CD4-positive, alpha-beta T cell (primary cell): ENCODE measurements at regions of chr12 and their contacts with region 1.

Region 1: DNA sequence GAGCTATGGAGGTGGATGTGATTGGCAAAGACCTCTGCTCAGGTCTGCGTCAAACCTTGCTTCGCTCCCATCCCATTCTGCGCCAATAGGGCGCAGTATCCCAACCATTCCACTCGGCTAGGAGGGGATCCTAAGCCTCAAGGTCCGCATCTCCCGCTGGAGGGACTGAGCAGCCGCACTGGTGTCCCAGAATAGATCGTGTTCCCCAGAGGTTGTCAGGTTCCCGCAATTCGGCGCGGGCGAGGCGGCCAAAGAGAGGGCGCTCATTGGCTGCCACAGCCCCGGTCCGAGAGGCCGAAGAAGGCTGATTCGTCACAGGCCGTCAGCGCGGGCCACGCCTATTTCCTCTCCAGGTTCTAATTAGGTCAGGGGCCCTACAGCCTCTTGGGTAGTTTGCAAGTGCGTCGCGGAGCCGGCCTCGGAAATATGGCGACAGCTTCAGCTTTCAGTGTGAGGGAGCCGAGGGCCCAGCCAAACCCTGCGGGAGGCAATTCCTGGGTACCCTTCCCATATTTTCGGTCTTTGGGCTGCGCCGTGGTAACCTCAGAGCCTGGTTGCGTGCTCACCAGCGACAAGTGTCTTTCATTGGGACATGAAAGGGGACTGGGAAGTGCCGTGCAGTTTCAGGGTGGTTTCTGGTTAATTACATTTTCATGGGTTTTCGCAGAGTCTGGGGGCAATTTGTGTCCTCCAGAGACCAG is 5.0 kb downstream of the OR10AD1 start:
- DNase-seq: peak; percentile 80 to 97 (median 86)
- ATAC-seq: peak; percentile 84
- H3K4me3 ChIP-seq: peak overlapping the region; percentile 97
- H3K4me3 Mint-ChIP-seq: peak overlapping the region; percentile 86
- H3K27ac ChIP-seq: peak overlapping the region; percentile 96 to 99
- H3K27ac Mint-ChIP-seq: peak overlapping the region; percentile 87
- H3K4me1 ChIP-seq: peaks cover 39% of the 10 kb centered on the region
- H3K4me1 Mint-ChIP-seq: peaks cover 48% of the 10 kb centered on the region
- H3K27me3 ChIP-seq: no peaks in the 10 kb centered on the region
- H3K27me3 Mint-ChIP-seq: peaks cover 5% of the 10 kb centered on the region
- CTCF ChIP-seq: no peak

Region 2: DNA sequence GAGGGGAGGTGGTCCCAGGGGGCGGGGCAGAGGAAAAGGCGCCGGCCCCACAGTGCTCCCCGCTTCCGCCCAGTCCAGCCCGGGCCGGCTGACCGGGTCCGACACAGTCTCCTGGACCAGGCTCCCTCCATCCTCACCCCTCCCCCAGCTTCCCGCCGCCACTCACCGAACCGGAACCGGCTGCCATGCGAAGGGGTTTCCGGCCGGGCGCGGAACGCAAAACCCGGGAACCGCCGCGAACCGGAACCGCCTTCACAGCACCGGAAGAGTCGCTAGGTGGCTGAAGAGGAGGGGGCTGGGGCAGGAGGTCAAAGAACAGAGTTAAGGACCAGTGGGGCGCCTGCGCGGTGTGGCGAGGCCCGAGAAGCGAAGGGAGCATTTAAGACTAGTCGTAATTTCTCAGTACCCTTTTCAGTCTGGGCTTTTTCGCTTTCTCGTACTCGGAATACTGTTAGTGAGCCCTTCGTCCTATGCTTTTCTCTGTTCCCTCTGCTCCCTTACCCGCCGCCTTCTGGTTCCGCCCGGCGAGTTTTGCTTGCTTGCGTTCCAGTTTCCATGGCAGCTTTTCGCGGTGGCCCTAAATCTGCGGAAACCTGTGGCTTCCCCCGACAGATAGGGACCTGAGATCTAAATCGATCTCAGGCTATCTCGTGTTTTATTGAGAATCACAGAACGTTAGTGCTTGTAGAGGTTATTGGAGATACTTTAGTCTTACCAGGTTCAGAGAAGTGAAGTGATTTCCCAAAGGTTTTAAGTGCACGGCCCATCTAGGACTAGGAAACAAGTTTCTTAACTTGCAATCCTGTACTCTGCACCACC is 92.0 kb before region 1 on chr12 and contains the start of gene SENP1:
- CTCF ChIA-PET with region 1: no interaction called
- POLR2A ChIA-PET with region 1: interaction called, 26 read pairs
- intact Hi-C with region 1: loop called in 1 of 2 experiments (anchors 5 kb)
- DNase-seq: peak; percentile 84 to 95 (median 88)
- ATAC-seq: peak; percentile 80
- H3K4me3 ChIP-seq: peak within 1 kb of the TSS; percentile 89
- H3K4me3 Mint-ChIP-seq: peak within 1 kb of the TSS; percentile 94
- H3K27ac ChIP-seq: peak within 1 kb of the TSS; percentile 94 to 96
- H3K27ac Mint-ChIP-seq: peak within 1 kb of the TSS; percentile 89
- H3K4me1 ChIP-seq: peaks cover 33% of the 10 kb centered on the region
- H3K4me1 Mint-ChIP-seq: peaks cover 54% of the 10 kb centered on the region
- H3K27me3 ChIP-seq: no peaks in the 10 kb centered on the region
- H3K27me3 Mint-ChIP-seq: no peaks in the 10 kb centered on the region
- CTCF ChIP-seq: peak; percentile 44
- total RNA-seq, gene SENP1: 20.3 to 25.7 TPM

Region 3: GRCh38 chr12:48142818-48143674 is 55.1 kb before region 1 on chr12:
- CTCF ChIA-PET with region 1: no interaction called
- POLR2A ChIA-PET with region 1: no interaction called
- intact Hi-C with region 1: no loop called
- DNase-seq: no peak
- ATAC-seq: no peak
- H3K4me3 ChIP-seq: no peak overlapping the region
- H3K4me3 Mint-ChIP-seq: no peak overlapping the region
- H3K27ac ChIP-seq: no peak overlapping the region
- H3K27ac Mint-ChIP-seq: peak overlapping the region; percentile 31
- H3K4me1 ChIP-seq: no peaks in the 10 kb centered on the region
- H3K4me1 Mint-ChIP-seq: no peaks in the 10 kb centered on the region
- H3K27me3 ChIP-seq: no peaks in the 10 kb centered on the region
- H3K27me3 Mint-ChIP-seq: no peaks in the 10 kb centered on the region
- CTCF ChIP-seq: no peak

Region 4: DNA sequence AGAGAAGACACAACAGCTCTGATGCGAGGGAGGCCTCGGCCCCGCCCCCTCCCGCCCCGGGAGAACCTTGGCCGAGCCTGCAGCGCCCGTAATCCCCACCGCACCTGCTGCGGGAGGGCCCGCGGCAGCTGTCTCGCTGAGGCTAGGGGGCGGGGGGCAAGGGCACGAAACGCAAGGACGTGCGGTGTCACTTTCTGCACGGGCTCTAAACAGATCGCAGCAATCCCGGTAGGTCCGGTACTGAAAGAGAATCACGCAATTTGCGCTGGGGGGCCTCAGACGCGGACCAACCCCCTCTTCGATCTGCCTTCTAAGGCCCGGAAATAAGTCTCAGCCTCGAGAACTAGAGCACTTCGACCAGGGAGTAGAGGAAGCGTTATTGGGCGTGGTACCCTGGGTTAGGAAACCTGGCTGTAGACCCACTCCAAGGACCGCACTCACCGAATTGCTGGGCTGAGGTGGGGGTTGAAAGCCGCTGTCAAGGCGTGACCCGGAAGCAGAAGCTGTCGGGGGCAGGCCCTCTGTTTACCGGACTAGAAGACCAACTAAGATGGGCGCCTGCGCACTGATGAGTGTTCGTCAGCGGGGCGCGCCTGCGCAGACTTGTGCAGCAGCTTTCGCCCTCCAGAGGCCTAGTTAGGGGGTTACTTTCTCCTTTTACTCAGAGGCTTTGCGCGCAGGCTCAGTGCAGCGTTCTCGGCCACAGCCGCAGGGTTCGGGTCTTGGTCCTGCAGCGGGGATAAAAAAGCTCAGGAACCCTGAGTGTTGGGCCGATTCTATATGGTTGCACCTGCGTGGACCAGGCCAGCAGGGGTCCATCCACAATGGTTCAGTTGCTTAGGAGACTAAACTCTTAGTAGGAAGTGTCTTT is 40.9 kb before region 1 on chr12 and contains the start of gene ASB8:
- CTCF ChIA-PET with region 1: interaction called, 10 read pairs
- POLR2A ChIA-PET with region 1: interaction called, 67 read pairs
- intact Hi-C with region 1: loop called (anchors 1 to 5 kb)
- DNase-seq: peak; percentile 98 to 100 (median 99)
- ATAC-seq: peak; percentile 87
- H3K4me3 ChIP-seq: peak within 1 kb of the TSS; percentile 97
- H3K4me3 Mint-ChIP-seq: peak within 1 kb of the TSS; percentile 97
- H3K27ac ChIP-seq: peak within 1 kb of the TSS; percentile 78 to 89
- H3K27ac Mint-ChIP-seq: peak within 1 kb of the TSS; percentile 99
- H3K4me1 ChIP-seq: peaks cover 25% of the 10 kb centered on the region
- H3K4me1 Mint-ChIP-seq: peaks cover 63% of the 10 kb centered on the region
- H3K27me3 ChIP-seq: no peaks in the 10 kb centered on the region
- H3K27me3 Mint-ChIP-seq: no peaks in the 10 kb centered on the region
- CTCF ChIP-seq: peak; percentile 48
- total RNA-seq, gene ASB8: 50.9 TPM

Region 5: GRCh38 chr12:48183091-48183875 is 14.8 kb before region 1 on chr12 and contains the start of gene CCDC184:
- CTCF ChIA-PET with region 1: interaction called, 23 read pairs
- POLR2A ChIA-PET with region 1: interaction called, 73 read pairs
- intact Hi-C with region 1: no loop called
- DNase-seq: peak; percentile 51 to 93 (median 68)
- ATAC-seq: peak; percentile 76
- H3K4me3 ChIP-seq: peak within 1 kb of the TSS; percentile 76
- H3K4me3 Mint-ChIP-seq: peak within 1 kb of the TSS; percentile 93
- H3K27ac ChIP-seq: no peak within 1 kb of the TSS
- H3K27ac Mint-ChIP-seq: peak within 1 kb of the TSS; percentile 50
- H3K4me1 ChIP-seq: peaks cover 25% of the 10 kb centered on the region
- H3K4me1 Mint-ChIP-seq: no peaks in the 10 kb centered on the region
- H3K27me3 ChIP-seq: peaks cover 14 to 15% of the 10 kb centered on the region in 2 experiments
- H3K27me3 Mint-ChIP-seq: peaks cover 47% of the 10 kb centered on the region
- CTCF ChIP-seq: peak; percentile 51
- total RNA-seq, gene CCDC184: 0.92 to 1.0 TPM

Region 6: DNA sequence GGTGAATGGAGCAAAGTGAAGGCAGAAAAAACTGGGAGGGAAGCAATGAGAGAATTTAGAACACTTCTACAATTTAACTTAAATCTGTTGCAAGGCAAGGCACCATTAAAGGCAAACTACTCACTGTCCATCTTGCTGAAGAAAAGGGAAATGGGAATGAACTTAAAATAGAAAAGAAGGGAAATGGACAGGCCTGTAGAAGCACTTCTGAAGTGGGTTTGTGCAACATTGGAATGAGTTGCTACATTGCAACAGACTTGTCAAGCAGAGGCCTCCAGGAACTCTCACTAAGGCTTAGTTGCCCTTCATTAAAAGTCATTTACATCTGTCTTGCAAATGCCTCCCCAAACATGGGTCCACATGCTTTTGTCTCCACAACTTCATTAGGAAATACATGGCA is 18.7 kb after region 1 on chr12:
- CTCF ChIA-PET with region 1: no interaction called
- POLR2A ChIA-PET with region 1: interaction called, 44 read pairs
- intact Hi-C with region 1: no loop called
- DNase-seq: no peak
- ATAC-seq: no peak
- H3K4me3 ChIP-seq: no peak overlapping the region
- H3K4me3 Mint-ChIP-seq: no peak overlapping the region
- H3K27ac ChIP-seq: no peak overlapping the region
- H3K27ac Mint-ChIP-seq: no peak overlapping the region
- H3K4me1 ChIP-seq: peaks cover 8% of the 10 kb centered on the region
- H3K4me1 Mint-ChIP-seq: peaks cover 16% of the 10 kb centered on the region
- H3K27me3 ChIP-seq: no peaks in the 10 kb centered on the region
- H3K27me3 Mint-ChIP-seq: peaks cover 8% of the 10 kb centered on the region
- CTCF ChIP-seq: no peak

Region 7: DNA sequence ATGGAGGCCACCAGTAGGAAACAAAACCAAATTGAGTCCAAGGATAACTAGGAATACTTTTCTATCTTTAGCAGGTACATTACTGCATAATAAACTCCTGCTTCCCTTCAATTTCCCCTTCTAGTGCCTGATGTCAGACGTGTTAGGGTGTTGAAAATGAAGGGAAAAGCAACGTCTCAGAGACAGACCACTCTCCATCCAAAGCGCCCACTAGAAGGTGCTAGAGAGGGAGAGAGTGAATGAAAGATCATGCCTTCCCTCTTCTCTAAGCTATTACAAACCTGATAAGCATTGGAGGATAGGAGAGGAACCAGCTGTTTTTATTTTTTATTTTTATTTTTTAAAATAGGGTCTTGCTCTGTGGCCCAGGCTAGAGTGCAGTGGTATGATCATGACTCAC is 88.5 kb after region 1 on chr12:
- CTCF ChIA-PET with region 1: no interaction called
- POLR2A ChIA-PET with region 1: interaction called, 11 read pairs
- intact Hi-C with region 1: loop called in 1 of 2 experiments (anchors 5 kb)
- DNase-seq: peak in 2 of 14 experiments; percentile 22 to 29
- ATAC-seq: no peak
- H3K4me3 ChIP-seq: no peak overlapping the region
- H3K4me3 Mint-ChIP-seq: no peak overlapping the region
- H3K27ac ChIP-seq: no peak overlapping the region
- H3K27ac Mint-ChIP-seq: peak overlapping the region; percentile 81
- H3K4me1 ChIP-seq: peaks cover 14% of the 10 kb centered on the region
- H3K4me1 Mint-ChIP-seq: peaks cover 18% of the 10 kb centered on the region
- H3K27me3 ChIP-seq: no peaks in the 10 kb centered on the region
- H3K27me3 Mint-ChIP-seq: peaks cover 25% of the 10 kb centered on the region
- CTCF ChIP-seq: no peak

Region 8: DNA sequence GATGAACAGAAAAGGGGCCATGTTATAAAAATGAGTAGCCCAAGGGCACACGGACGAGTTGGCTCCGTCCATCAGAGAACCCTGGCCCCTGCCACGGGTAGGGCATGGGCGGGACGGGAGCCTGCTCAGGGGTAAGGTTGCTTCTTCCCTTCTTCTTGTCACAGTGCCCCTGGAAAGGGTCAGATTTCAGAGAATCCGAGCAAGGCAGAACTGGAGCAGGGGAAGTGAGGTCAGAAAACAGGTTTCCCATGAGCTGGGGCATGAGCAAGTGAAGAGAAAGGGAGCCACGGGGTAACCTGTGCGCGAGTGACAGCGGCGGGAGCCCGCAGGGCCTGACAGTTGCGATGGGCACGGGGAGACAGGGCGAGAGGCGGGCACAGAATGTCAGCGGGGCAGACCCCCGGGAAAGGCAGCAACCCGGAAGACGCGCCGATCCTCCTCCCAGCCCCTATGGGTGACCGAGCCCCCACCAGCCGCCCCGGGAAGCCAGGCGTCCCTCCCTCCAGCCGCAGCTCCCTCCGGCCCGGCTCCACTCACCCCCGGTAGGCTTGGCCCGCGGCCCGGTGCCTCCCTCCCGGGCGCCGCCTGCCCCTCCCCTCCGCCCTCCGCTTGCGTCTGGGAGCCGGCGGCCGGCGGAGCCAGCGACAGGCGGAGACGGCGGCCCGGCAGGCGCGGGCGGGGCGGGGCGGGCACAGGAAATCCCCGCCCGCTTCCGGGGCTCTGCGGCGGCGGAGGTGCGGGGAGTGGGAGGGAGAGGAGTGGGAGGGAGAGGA is 152.3 kb after region 1 on chr12 and contains the start of gene ZNF641:
- CTCF ChIA-PET with region 1: no interaction called
- POLR2A ChIA-PET with region 1: interaction called, 37 read pairs
- intact Hi-C with region 1: loop called (anchors 5 kb)
- DNase-seq: peak; percentile 68 to 94 (median 80)
- ATAC-seq: peak; percentile 88
- H3K4me3 ChIP-seq: peak within 1 kb of the TSS; percentile 96
- H3K4me3 Mint-ChIP-seq: peak within 1 kb of the TSS; percentile 97
- H3K27ac ChIP-seq: peak within 1 kb of the TSS; percentile 70 to 81
- H3K27ac Mint-ChIP-seq: peak within 1 kb of the TSS; percentile 98
- H3K4me1 ChIP-seq: peaks cover 19% of the 10 kb centered on the region
- H3K4me1 Mint-ChIP-seq: peaks cover 47% of the 10 kb centered on the region
- H3K27me3 ChIP-seq: no peaks in the 10 kb centered on the region
- H3K27me3 Mint-ChIP-seq: no peaks in the 10 kb centered on the region
- CTCF ChIP-seq: no peak
- total RNA-seq, gene ZNF641: 16.6 to 19.8 TPM